Activated naive CD4-positive, alpha-beta T cell treated with anti-CD3 and anti-CD28 coated beads for 36 hours (primary cell): ENCODE measurements at regions of chr1 and their contacts with region 1.

Region 1: DNA sequence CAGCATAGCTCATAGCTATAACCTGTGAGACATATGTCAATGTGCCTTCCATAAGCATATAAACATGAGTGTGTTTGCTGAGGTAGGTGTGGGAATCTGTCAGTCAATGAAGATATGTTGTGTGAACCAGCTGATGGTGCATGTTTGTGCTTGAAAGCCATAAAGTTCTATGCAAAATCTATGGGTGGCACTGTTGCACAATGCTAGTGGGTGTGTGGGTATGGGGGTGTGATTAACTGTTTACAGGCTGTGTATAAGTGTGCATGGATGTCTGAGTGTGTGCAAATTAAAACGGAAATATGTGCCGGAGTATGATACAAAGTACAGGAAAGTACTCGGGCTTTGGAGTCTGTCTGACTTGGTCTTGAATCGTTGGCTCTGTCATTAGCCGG is 1.0 kb upstream of the ATP2B4 start:
- DNase-seq: peak; percentile 81
- H3K4me3 Mint-ChIP-seq: peak overlapping the region; percentile 8
- H3K27ac Mint-ChIP-seq: peak overlapping the region; percentile 91
- H3K4me1 Mint-ChIP-seq: peaks cover 65% of the 10 kb centered on the region
- H3K27me3 Mint-ChIP-seq: no peaks in the 10 kb centered on the region

Region 2: GRCh38 chr1:203504397-203505250 is 121.0 kb before region 1 on chr1:
- CTCF ChIA-PET with region 1: interaction called, 22 read pairs
- intact Hi-C with region 1: loop called (anchors 1 kb)
- DNase-seq: peak; percentile 91
- H3K4me3 Mint-ChIP-seq: no peak overlapping the region
- H3K27ac Mint-ChIP-seq: no peak overlapping the region
- H3K4me1 Mint-ChIP-seq: peaks cover 6% of the 10 kb centered on the region
- H3K27me3 Mint-ChIP-seq: no peaks in the 10 kb centered on the region

Region 3: DNA sequence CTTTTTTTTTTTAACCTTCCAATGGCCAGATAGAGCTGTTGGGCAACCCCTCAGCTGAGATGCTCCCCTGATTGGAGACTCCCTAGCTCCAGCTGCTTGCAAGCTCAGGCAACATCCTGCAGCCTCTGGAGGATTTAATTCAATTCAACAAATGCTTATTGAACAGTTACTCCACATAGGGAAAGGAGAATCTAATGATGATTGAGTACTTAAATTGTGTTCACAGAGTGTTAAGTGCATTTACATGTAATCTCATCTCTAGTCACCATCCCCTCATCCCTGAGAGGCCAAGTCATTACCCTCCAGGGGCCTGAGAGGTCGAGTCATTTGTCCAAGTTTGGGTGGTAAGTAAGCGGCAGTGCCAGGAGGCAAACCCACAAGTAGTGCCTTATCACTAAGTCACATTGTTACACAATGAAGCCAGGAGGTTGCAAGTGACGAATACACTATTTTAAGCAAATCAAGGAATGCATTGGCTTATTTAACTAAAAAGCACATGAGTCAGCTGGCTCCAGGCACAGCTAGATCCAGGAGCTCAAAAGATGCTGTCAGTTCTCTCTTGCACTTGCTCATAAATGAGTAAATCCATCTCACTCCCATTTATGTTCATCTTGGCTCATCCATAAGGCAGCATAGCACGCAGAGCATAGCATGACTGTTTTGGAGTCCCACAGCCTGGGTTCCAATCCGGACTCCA is 67.4 kb before region 1 on chr1:
- CTCF ChIA-PET with region 1: no interaction called
- intact Hi-C with region 1: no loop called
- DNase-seq: no peak
- H3K4me3 Mint-ChIP-seq: no peak overlapping the region
- H3K27ac Mint-ChIP-seq: no peak overlapping the region
- H3K4me1 Mint-ChIP-seq: no peaks in the 10 kb centered on the region
- H3K27me3 Mint-ChIP-seq: no peaks in the 10 kb centered on the region

Region 4: DNA sequence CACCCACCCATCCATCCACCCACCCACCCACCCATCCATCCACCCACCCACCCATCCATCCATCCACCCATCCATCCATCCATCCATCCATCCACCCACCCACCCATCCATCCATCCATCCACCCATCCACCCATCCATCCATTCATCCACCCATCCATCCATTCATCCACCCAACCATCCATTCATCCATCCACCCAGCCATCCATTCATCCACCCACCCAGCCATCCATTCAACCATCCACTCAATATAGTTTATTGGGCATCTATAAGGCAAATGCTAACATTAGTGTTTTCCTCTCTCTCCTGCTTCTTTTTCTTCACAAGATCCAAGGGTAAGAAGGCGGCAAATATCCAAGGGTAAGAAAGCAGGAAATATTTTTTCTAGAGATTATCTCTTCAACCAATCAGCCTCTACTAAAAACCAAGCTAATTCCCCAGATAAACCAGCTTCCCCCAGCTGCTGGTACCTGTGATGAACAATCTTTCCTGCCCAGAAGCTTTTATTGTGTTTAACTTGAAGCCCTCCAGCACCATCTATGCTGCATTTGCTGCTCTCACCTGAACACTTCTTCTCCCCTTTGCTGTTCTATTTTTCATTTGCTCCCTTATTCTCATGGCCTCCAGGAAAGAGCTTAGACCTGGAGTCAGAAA is 21.6 kb before region 1 on chr1:
- CTCF ChIA-PET with region 1: interaction called, 6 read pairs
- intact Hi-C with region 1: loop called (anchors 1 kb)
- DNase-seq: no peak
- H3K4me3 Mint-ChIP-seq: no peak overlapping the region
- H3K27ac Mint-ChIP-seq: no peak overlapping the region
- H3K4me1 Mint-ChIP-seq: peaks cover 32% of the 10 kb centered on the region
- H3K27me3 Mint-ChIP-seq: no peaks in the 10 kb centered on the region

Region 5: GRCh38 chr1:203673550-203674427 is 48.2 kb after region 1 on chr1:
- CTCF ChIA-PET with region 1: interaction called, 9 read pairs
- intact Hi-C with region 1: loop called (anchors 1 kb)
- DNase-seq: peak; percentile 84
- H3K4me3 Mint-ChIP-seq: peak overlapping the region; percentile 33
- H3K27ac Mint-ChIP-seq: peak overlapping the region; percentile 77
- H3K4me1 Mint-ChIP-seq: peaks cover 45% of the 10 kb centered on the region
- H3K27me3 Mint-ChIP-seq: no peaks in the 10 kb centered on the region

Region 6: GRCh38 chr1:203702130-203702577 is 76.5 kb after region 1 on chr1:
- CTCF ChIA-PET with region 1: interaction called, 82 read pairs
- intact Hi-C with region 1: loop called (anchors 1 kb)
- DNase-seq: peak; percentile 80
- H3K4me3 Mint-ChIP-seq: no peak overlapping the region
- H3K27ac Mint-ChIP-seq: peak overlapping the region; percentile 67
- H3K4me1 Mint-ChIP-seq: no peaks in the 10 kb centered on the region
- H3K27me3 Mint-ChIP-seq: no peaks in the 10 kb centered on the region

Region 7: DNA sequence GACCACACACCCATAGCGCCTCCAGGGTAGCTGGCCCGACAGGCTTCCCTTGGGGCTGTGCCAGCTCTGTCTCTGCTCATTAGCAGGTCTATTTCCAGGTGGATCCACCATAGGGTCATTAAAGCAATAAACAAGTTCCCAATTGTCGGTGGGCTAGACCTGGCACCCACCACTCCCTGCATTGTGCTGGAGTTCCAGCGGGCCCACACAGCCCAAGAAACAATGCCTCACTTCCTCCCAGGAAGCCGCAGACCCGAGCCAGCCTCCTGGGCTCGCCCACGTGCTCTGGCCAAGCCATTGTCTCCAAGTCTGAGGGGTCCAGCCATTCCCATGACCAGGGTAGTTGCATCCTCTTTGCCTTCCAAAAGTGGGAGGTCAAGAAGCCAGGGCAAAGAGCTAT is 419.8 kb after region 1 on chr1:
- CTCF ChIA-PET with region 1: no interaction called
- intact Hi-C with region 1: no loop called
- DNase-seq: no peak
- H3K4me3 Mint-ChIP-seq: no peak overlapping the region
- H3K27ac Mint-ChIP-seq: no peak overlapping the region
- H3K4me1 Mint-ChIP-seq: no peaks in the 10 kb centered on the region
- H3K27me3 Mint-ChIP-seq: peaks cover 4% of the 10 kb centered on the region

Region 8: GRCh38 chr1:204128964-204129896 is 503.6 kb after region 1 on chr1:
- CTCF ChIA-PET with region 1: no interaction called
- intact Hi-C with region 1: loop called (anchors 1 kb)
- DNase-seq: peak; percentile 64
- H3K4me3 Mint-ChIP-seq: no peak overlapping the region
- H3K27ac Mint-ChIP-seq: no peak overlapping the region
- H3K4me1 Mint-ChIP-seq: peaks cover 7% of the 10 kb centered on the region
- H3K27me3 Mint-ChIP-seq: no peaks in the 10 kb centered on the region